HAP-1 (cell line): ENCODE measurements at regions of chr12 and their contacts with region 1.

Region 1: DNA sequence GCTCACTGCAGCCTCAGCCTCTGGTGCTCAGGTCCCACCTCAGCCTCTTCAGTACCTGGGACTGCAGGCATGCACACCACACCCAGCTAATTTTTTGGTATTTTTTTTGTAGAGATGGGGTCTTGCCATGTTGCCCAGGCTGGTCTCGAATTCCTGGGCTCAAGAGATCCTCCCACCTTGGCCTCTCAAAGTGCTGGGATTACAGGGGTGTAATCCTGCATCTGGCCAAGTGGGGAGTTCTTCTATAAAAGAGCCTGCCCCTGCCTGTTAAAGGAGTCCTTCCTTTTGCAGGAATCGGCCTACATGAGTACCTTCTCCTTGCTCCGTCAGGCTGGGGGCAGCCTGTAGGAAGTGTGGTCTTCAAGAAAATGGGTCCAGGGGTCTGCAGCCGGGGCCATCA is 54.1 kb upstream of the RASSF3 start:
- DNase-seq: no peak
- H3K4me3 ChIP-seq: no peak overlapping the region
- H3K4me1 ChIP-seq: no peaks in the 10 kb centered on the region
- H3K27me3 ChIP-seq: no peaks in the 10 kb centered on the region

Region 2: GRCh38 chr12:64147011-64147631 is 409.1 kb before region 1 on chr12:
- in situ Hi-C with region 1: no loop called
- DNase-seq: no peak
- H3K4me3 ChIP-seq: no peak overlapping the region
- H3K4me1 ChIP-seq: no peaks in the 10 kb centered on the region
- H3K27me3 ChIP-seq: no peaks in the 10 kb centered on the region

Region 3: DNA sequence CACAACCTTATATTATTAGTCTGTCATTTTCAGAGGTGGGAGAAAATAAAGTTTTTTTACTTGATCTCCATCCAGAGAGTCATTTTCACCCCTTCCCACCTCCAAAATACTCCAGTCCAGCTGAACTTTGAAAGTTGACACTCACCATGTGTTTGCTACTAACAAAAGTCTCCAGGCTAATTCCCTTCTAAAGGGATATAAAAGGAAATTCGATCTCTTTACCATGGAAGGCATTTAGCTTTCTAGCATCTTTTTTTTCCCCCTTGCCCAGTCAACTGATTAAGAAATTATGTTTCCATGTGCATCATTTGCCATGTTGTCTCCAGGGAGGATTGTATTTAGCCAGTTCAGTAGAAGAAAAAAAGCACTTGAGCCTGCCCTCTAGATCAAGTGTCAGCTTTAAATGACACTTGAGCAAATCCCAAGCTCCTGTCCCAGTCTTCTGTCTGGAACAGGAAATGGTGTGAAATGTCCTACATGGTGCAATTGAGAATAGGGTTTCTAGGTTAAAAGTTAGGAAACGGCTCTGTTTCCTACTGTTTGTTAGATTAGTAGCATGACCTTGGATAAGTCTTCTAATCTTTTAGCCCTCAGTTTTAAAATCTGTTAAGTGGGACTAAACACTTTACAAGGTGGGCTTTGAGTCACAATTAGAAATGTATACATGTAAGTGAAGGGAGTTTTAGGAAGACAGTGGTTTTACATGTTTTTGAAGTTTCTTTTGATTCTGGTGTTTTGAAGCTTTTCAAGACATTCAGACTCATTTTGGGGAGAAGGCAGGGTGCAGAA is 135.8 kb after region 1 on chr12:
- in situ Hi-C with region 1: loop called (anchors 5 kb)
- DNase-seq: peak in 1 of 2 experiments; percentile 83
- H3K4me3 ChIP-seq: no peak overlapping the region
- H3K4me1 ChIP-seq: peaks cover 26% of the 10 kb centered on the region
- H3K27me3 ChIP-seq: no peaks in the 10 kb centered on the region